AG04449 (cell line): ENCODE measurements at regions of chr1 and their contacts with region 1.

Region 1: DNA sequence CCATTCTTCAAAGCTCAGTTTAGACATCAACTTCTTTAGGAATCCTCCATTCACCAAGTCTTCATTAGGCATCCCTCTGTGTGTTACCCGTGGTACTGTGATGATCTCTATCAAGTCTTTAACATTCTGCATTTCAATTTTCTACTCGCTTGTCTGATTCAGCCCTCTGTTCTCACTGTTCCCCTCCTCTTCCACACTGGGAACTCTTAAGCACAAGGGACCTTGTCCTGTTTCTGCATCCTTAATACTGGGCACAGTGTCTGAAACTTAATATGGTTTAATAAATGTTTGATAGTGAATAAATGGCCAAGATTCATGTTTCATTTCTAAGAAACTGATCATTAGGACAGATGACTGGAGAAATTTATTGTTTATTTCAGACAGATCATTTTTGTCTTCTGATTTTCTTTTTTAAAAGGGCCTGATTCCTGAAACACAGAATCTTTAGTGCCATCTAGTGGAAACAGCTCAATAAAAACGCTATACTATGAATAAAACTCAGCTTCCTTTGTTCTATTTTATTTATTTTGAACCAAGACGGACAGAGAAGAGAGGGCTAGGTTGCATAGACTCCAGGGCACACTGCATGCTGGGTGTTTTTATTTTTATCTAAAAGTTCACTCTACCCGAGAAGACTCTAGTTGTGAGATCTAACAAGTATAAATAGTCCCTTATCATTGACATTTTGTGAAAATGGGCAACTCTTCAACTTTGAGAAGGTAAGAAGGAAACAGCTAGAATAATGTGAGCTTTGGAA is 7.0 kb upstream of the TRIM45 start:
- DNase-seq: no peak
- H3K4me3 ChIP-seq: no peak overlapping the region
- CTCF ChIP-seq: no peak

Region 2: GRCh38 chr1:117059678-117060440 is 68.6 kb before region 1 on chr1 and contains the start of gene TTF2:
- CTCF ChIA-PET with region 1: interaction called, 592 read pairs
- POLR2A ChIA-PET with region 1: interaction called, 3 read pairs
- DNase-seq: peak; percentile 86
- H3K4me3 ChIP-seq: peak within 1 kb of the TSS; percentile 87
- CTCF ChIP-seq: no peak

Region 3: DNA sequence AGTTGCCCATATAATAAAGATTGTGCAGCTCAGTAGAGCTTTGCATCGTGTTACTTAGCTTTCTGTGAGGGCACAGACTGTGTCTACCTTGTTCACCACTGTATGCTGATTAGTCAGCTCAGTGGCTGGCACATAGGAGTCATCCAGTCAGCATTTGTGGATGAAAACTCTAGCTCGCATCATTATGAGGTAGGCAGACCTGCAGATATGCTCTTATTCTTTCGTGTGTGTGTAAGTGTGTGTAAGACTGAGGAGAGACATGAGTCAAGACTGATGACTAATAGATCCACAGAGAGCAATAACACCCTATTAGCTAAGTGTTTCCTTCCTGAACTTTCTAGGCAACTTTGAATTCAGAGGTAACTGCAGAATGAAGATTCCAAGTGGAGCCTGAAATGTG is 51.2 kb before region 1 on chr1:
- CTCF ChIA-PET with region 1: interaction called, 592 read pairs
- POLR2A ChIA-PET with region 1: no interaction called
- DNase-seq: peak; percentile 82
- H3K4me3 ChIP-seq: no peak overlapping the region
- CTCF ChIP-seq: no peak

Region 4: DNA sequence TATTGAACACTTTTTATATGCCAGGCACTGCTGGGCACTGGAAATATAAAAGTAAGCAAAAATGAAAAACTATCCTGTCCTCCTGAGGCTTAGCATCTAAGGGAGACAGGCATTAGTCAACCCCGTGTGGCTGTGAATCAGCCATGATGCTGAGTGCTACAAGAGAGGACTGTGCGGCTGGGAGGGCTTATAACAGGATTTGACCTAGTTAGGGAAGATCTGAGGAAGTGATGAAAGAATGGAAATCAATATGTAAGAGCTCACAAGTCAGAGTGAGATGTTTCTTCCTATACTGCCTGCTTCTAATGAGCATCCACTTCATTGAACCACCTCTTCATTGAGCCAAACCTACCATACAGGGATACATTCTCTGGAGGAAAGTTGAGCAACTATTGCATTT is 22.0 kb before region 1 on chr1:
- CTCF ChIA-PET with region 1: interaction called, 11 read pairs
- POLR2A ChIA-PET with region 1: no interaction called
- DNase-seq: no peak
- H3K4me3 ChIP-seq: no peak overlapping the region
- CTCF ChIP-seq: no peak

Region 5: DNA sequence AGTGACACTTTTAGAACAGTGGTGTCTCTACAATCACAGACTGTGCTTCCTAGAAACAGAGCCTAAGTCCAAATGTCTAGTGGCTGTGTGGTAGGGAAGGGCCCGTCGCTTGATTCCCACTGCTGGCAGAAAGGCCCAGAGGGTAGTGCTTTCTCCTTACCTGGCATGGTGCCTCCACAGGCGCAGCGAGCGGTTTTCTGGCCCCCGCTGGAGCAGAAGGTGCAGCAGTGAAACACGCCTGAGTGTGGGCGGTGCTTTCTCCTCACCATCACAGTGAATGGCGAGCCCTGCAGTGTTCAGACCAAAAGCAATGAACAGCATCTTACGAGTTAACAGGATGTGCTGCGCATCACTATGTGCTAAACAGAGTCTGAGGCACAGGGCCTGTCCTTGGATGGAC is 15.3 kb before region 1 on chr1:
- CTCF ChIA-PET with region 1: interaction called, 29 read pairs
- POLR2A ChIA-PET with region 1: no interaction called
- DNase-seq: no peak
- H3K4me3 ChIP-seq: no peak overlapping the region
- CTCF ChIP-seq: no peak

Region 6: GRCh38 chr1:117146570-117147346 is 18.3 kb after region 1 on chr1:
- CTCF ChIA-PET with region 1: interaction called, 39 read pairs
- POLR2A ChIA-PET with region 1: no interaction called
- DNase-seq: peak; percentile 89
- H3K4me3 ChIP-seq: no peak overlapping the region
- CTCF ChIP-seq: no peak

Region 7: DNA sequence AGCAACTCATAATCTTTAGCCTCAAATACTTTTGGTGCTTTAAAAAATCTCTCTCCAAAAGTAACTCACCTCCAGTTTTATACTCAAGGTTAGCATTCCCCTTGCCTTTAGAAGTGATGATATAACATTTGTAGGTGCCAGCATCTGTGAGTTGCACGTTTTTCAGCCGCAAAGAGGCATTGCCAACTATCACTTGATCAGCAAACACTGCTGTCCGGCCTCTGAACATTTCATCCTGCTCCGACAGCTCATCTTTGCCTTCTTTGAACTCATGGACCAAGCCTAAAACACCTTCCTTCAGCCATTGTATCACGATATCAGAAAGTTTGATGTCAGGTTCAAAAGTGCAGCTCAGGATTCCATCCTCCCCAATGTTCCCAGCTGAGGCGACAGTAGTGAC is 28.0 kb after region 1 on chr1:
- CTCF ChIA-PET with region 1: interaction called, 10 read pairs
- POLR2A ChIA-PET with region 1: no interaction called
- DNase-seq: no peak
- H3K4me3 ChIP-seq: no peak overlapping the region
- CTCF ChIP-seq: no peak

Region 8: GRCh38 chr1:117388328-117388727 is 259.8 kb after region 1 on chr1:
- CTCF ChIA-PET with region 1: no interaction called
- POLR2A ChIA-PET with region 1: no interaction called
- DNase-seq: no peak
- H3K4me3 ChIP-seq: no peak overlapping the region
- CTCF ChIP-seq: no peak